Heart right ventricle (tissue), 16 donors: ENCODE measurements at regions of chr17 and their contacts with region 1.

Region 1: GRCh38 chr17:1783834-1784611 is 22.2 kb downstream of the SERPINF1 start:
- DNase-seq: peak; percentile 68 to 87
- ATAC-seq: peak; percentile 78 to 85 (median 84)
- H3K4me3 ChIP-seq: peak overlapping the region in 6 of 10 donors; percentile 2 to 27 (median 12)
- H3K27ac ChIP-seq: peak overlapping the region; percentile 89 to 95 (median 93)
- H3K4me1 ChIP-seq: peaks cover 21 to 92% (median 61%) of the 10 kb centered on the region in 9 donors
- H3K27me3 ChIP-seq: no peaks in the 10 kb centered on the region
- CTCF ChIP-seq: peak; percentile 37 to 82 (median 70)

Region 2: GRCh38 chr17:1312261-1312870 is 471.7 kb before region 1 on chr17:
- intact Hi-C with region 1: no loop called
- DNase-seq: no peak
- ATAC-seq: no peak
- H3K4me3 ChIP-seq: no peak overlapping the region
- H3K27ac ChIP-seq: no peak overlapping the region
- H3K4me1 ChIP-seq: peaks cover 0 to 13% (median 8%) of the 10 kb centered on the region in 9 donors
- H3K27me3 ChIP-seq: peaks cover 0 to 27% (median 12%) of the 10 kb centered on the region in 7 donors
- CTCF ChIP-seq: no peak

Region 3: GRCh38 chr17:1573916-1574696 is 209.9 kb before region 1 on chr17:
- intact Hi-C with region 1: loop called in 1 of 10 experiments (anchors 10 kb)
- DNase-seq: peak; percentile 85 to 91
- ATAC-seq: peak; percentile 63 to 83 (median 72)
- H3K4me3 ChIP-seq: peak overlapping the region in 1 of 10 donors; percentile 6
- H3K27ac ChIP-seq: peak overlapping the region in 9 of 10 donors; percentile 55 to 94 (median 69)
- H3K4me1 ChIP-seq: peaks cover 26 to 54% (median 46%) of the 10 kb centered on the region in 9 donors
- H3K27me3 ChIP-seq: no peaks in the 10 kb centered on the region
- CTCF ChIP-seq: peak; percentile 95 to 99 (median 97)

Region 4: GRCh38 chr17:1661045-1661444 is 123.0 kb before region 1 on chr17:
- intact Hi-C with region 1: loop called in 7 of 10 experiments (anchors 5 to 10 kb)
- DNase-seq: no peak
- ATAC-seq: no peak
- H3K4me3 ChIP-seq: no peak overlapping the region
- H3K27ac ChIP-seq: no peak overlapping the region
- H3K4me1 ChIP-seq: no peaks in the 10 kb centered on the region
- H3K27me3 ChIP-seq: no peaks in the 10 kb centered on the region
- CTCF ChIP-seq: no peak

Region 5: DNA sequence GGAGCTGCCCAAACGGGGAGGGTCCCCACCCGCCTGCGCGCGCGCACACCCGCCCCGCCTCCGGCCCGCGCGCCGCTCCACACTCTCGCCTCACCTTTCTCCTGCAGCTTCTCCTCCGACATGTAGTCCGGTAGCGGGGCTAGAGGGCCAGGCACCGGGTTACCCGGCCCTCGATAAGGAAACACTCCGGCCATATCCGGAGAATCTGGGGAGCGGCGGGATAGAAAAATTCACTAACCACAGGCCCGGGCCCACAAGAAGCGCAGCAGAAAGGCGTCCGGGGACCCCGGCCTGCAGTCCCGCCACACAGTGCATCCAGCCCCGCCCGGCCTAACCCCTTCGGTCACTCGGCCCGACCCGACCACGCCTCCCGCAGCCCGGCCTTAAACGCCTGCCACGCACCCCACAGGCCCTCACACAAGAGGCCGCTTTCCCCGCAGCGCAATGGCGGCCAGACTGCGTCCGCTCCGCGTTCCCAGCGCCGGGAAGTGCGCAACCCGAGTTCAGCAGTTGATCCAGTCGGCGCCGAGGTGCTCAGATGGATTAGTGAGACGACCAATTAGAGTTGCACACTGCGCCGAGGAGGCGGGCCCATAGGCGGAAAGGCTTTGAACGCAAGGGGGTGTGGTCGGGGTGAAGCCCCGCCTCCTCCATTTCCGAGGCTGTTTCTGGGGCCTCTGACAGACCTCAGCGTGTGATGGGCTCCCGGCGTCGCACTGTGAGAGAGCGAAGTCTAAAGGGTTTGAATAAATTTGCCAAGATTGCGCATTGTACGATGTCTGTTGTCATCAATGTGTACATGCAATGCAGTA is 99.4 kb before region 1 on chr17 and contains the start of gene PRPF8:
- intact Hi-C with region 1: loop called in 1 of 10 experiments (anchors 5 kb)
- DNase-seq: peak; percentile 98
- ATAC-seq: peak; percentile 99 to 100 (median 100)
- H3K4me3 ChIP-seq: peak within 1 kb of the TSS; percentile 48 to 98 (median 86)
- H3K27ac ChIP-seq: peak within 1 kb of the TSS; percentile 81 to 98 (median 95)
- H3K4me1 ChIP-seq: peaks cover 0 to 28% (median 24%) of the 10 kb centered on the region in 9 donors
- H3K27me3 ChIP-seq: no peaks in the 10 kb centered on the region
- CTCF ChIP-seq: peak in 1 of 9 donors; percentile 3
- total RNA-seq, gene PRPF8: 137 to 205 (median 179) TPM

Region 6: GRCh38 chr17:1829592-1830257 is 45.7 kb after region 1 on chr17 and contains the starts of genes RPA1 and SMYD4:
- intact Hi-C with region 1: loop called in 1 of 10 experiments (anchors 2 kb)
- DNase-seq: peak; percentile 85 to 90
- ATAC-seq: peak; percentile 99 to 100 (median 100)
- H3K4me3 ChIP-seq: peak within 1 kb of the TSS; percentile 50 to 97 (median 79)
- H3K27ac ChIP-seq: peak within 1 kb of the TSS; percentile 44 to 91 (median 88)
- H3K4me1 ChIP-seq: peaks cover 2 to 43% (median 18%) of the 10 kb centered on the region in 9 donors
- H3K27me3 ChIP-seq: no peaks in the 10 kb centered on the region
- CTCF ChIP-seq: no peak
- total RNA-seq, gene RPA1: 51.1 to 96.6 (median 75.4) TPM
- total RNA-seq, gene SMYD4: 7.2 to 13.5 (median 9.3) TPM

Region 7: DNA sequence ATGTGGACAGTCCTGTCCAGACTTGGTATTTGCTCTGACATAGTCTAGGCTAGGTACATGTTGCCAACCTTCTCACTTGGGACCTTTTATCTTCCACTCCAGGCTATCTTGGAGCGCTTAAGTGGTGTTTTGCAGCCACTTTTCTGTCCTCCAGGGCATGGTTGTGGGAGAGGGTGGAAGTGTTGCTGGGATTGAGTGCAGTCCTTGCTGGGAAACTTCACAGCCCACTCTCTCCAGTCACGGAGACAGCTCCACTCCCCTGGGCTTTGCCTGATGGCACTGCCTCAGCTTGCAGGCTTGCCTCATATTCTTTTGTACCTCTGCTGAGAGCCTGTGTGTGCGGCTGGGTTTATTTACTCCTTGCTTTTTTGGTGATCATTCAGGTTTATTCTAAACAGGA is 63.2 kb after region 1 on chr17:
- intact Hi-C with region 1: no loop called
- DNase-seq: peak; percentile 51 to 64
- ATAC-seq: peak; percentile 81 to 99 (median 93)
- H3K4me3 ChIP-seq: no peak overlapping the region
- H3K27ac ChIP-seq: peak overlapping the region; percentile 0 to 67 (median 46)
- H3K4me1 ChIP-seq: peaks cover 0 to 26% (median 10%) of the 10 kb centered on the region in 9 donors
- H3K27me3 ChIP-seq: no peaks in the 10 kb centered on the region
- CTCF ChIP-seq: no peak